Mammary epithelial cell (primary cell): ENCODE measurements at regions of chr4 and their contacts with region 1.

Region 1: DNA sequence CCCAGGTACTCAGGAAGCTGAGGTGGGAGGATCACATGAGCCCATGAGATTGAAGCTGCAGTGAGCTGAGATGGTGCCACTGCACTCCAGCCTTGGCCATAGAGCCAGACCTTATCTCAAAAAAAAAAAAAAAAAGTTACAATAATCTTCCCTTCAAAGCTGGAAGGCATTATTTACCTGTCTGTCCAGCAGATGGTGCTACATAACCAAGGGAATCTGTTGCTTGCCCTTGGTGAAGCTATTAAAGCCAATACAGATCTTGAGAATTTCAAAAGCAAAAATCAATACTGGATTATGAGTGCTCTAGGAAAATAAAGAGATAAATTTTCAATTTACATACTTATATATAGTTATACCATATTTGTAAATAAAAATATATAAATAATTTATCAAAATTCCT is 25.9 kb downstream of the PKD2 start:
- DNase-seq: peak; percentile 52
- H3K4me3 ChIP-seq: no peak overlapping the region
- H3K27ac ChIP-seq: no peak overlapping the region
- H3K4me1 ChIP-seq: peaks cover 11% of the 10 kb centered on the region
- H3K27me3 ChIP-seq: no peaks in the 10 kb centered on the region
- CTCF ChIP-seq: peak; percentile 68 to 69

Region 2: GRCh38 chr4:87985097-87985886 is 48.0 kb before region 1 on chr4:
- CTCF ChIA-PET with region 1: interaction called, 11 read pairs
- dilution Hi-C with region 1: no loop called
- in situ Hi-C with region 1: no loop called
- intact Hi-C with region 1: no loop called
- DNase-seq: peak; percentile 57
- H3K4me3 ChIP-seq: no peak overlapping the region
- H3K27ac ChIP-seq: no peak overlapping the region
- H3K4me1 ChIP-seq: no peaks in the 10 kb centered on the region
- H3K27me3 ChIP-seq: no peaks in the 10 kb centered on the region
- CTCF ChIP-seq: peak; percentile 85 to 95

Region 3: GRCh38 chr4:88054901-88055300 is 21.6 kb after region 1 on chr4:
- CTCF ChIA-PET with region 1: no interaction called
- dilution Hi-C with region 1: no loop called
- in situ Hi-C with region 1: no loop called
- intact Hi-C with region 1: loop called (anchors 2 kb)
- DNase-seq: peak; percentile 39
- H3K4me3 ChIP-seq: no peak overlapping the region
- H3K27ac ChIP-seq: no peak overlapping the region
- H3K4me1 ChIP-seq: no peaks in the 10 kb centered on the region
- H3K27me3 ChIP-seq: no peaks in the 10 kb centered on the region
- CTCF ChIP-seq: peak; percentile 40 to 63

Region 4: GRCh38 chr4:88196013-88196365 is 162.7 kb after region 1 on chr4:
- CTCF ChIA-PET with region 1: interaction called, 10 read pairs
- dilution Hi-C with region 1: loop called (anchors 10 kb)
- in situ Hi-C with region 1: no loop called
- intact Hi-C with region 1: no loop called
- DNase-seq: no peak
- H3K4me3 ChIP-seq: no peak overlapping the region
- H3K27ac ChIP-seq: no peak overlapping the region
- H3K4me1 ChIP-seq: no peaks in the 10 kb centered on the region
- H3K27me3 ChIP-seq: no peaks in the 10 kb centered on the region
- CTCF ChIP-seq: no peak

Region 5: DNA sequence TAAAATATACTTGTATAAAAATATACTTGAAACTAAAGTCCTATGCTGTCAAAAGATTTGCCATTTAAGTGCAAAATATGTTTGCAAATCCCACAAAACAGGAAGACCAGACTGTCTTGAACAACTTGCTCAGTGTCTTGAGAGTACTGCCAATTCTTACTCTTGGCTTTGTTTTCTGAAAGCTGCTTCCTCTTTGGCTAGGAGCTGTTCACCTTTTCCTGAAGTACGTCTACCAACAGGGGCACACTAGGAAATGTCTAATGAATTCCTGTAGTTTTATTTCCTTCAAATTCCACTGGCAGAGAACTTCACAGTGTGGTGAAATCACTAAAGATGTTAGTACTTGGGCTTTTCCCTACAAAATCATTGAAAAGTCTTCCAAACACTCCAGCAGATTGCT is 171.6 kb after region 1 on chr4:
- CTCF ChIA-PET with region 1: no interaction called
- dilution Hi-C with region 1: loop called (anchors 10 kb)
- in situ Hi-C with region 1: no loop called
- intact Hi-C with region 1: no loop called
- DNase-seq: no peak
- H3K4me3 ChIP-seq: no peak overlapping the region
- H3K27ac ChIP-seq: no peak overlapping the region
- H3K4me1 ChIP-seq: no peaks in the 10 kb centered on the region
- H3K27me3 ChIP-seq: no peaks in the 10 kb centered on the region
- CTCF ChIP-seq: no peak

Region 6: DNA sequence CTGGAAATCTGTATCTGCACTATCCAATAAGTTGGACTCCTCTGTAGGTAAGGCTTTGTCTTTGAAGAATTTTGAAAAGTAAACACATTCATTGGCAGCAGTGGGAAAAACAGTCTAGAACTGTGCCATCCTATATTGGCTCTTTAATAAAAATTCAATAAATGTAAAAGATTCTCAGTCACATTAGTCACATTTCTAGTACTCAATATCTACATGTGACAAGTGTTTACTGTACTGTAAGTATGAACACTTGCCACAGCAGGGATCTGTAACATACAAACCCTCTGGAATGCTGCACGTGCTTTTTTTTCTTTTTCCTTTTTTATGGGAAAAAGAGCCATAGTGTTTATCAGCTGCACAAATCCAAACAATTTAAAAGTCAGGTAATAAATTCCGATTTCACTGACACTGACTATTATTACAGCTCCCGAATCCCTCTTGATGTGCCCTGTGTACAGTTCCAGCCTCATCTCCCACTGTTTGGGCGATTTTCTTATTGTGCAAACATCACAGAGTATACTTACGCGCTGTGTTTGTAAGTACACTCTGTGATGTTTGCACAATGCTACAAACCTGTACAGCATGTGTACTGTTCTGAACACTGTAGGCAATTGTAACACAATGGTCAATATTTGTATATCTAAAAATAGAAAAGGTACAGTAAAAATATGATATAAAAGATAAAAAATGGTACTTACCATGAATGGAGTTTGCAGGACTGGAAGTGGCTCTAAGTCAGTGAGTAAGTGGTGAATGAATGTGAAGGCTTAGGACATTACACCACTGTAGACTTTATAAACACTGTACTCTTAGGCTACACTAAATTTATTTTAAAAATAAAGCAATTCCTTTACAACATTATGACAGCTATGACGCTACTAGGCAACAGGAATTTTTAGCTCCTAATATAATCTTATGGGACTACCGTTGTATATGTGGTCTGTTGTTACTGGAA is 481.5 kb after region 1 on chr4:
- CTCF ChIA-PET with region 1: no interaction called
- dilution Hi-C with region 1: no loop called
- in situ Hi-C with region 1: loop called in 1 of 2 experiments (anchors 10 kb)
- intact Hi-C with region 1: loop called (anchors 5 kb)
- DNase-seq: no peak
- H3K4me3 ChIP-seq: no peak overlapping the region
- H3K27ac ChIP-seq: no peak overlapping the region
- H3K4me1 ChIP-seq: no peaks in the 10 kb centered on the region
- H3K27me3 ChIP-seq: no peaks in the 10 kb centered on the region
- CTCF ChIP-seq: no peak